GM12878 (cell line): ENCODE measurements at regions of chr9 and their contacts with region 1.

Region 1: GRCh38 chr9:19137282-19137681 is 10.0 kb upstream of the PLIN2 start:
- DNase-seq: no peak
- ATAC-seq: no peak
- H3K4me3 ChIP-seq: no peak overlapping the region
- H3K27ac ChIP-seq: no peak overlapping the region
- H3K4me1 ChIP-seq: no peaks in the 10 kb centered on the region; the same call in 1 of the 2 replicates
- H3K27me3 ChIP-seq: no peaks in the 10 kb centered on the region
- CTCF ChIP-seq: no peak
- EP300 ChIP-seq: no peak
- POLR2A ChIP-seq: no peak
- RAD21 ChIP-seq: no peak

Region 2: GRCh38 chr9:19154135-19154612 is 16.9 kb after region 1 on chr9:
- CTCF ChIA-PET with region 1: interaction called, 8 read pairs
- POLR2A ChIA-PET with region 1: interaction called, 4 read pairs
- RAD21 ChIA-PET with region 1: interaction called, 5 read pairs
- SMC1A ChIA-PET with region 1: interaction called, 15 read pairs
- in situ Hi-C with region 1: no loop called
- intact Hi-C with region 1: no loop called
- DNase-seq: no peak
- ATAC-seq: peak; percentile 21; the same call in 2 of the 3 replicates
- H3K4me3 ChIP-seq: no peak overlapping the region
- H3K27ac ChIP-seq: no peak overlapping the region
- H3K4me1 ChIP-seq: no peaks in the 10 kb centered on the region; the same call in 1 of the 2 replicates
- H3K27me3 ChIP-seq: no peaks in the 10 kb centered on the region
- CTCF ChIP-seq: no peak
- EP300 ChIP-seq: no peak
- POLR2A ChIP-seq: no peak
- RAD21 ChIP-seq: no peak

Region 3: GRCh38 chr9:19161257-19162025 is 24.2 kb after region 1 on chr9:
- CTCF ChIA-PET with region 1: interaction called, 8 read pairs
- POLR2A ChIA-PET with region 1: interaction called, 6 read pairs
- RAD21 ChIA-PET with region 1: interaction called, 5 read pairs
- SMC1A ChIA-PET with region 1: interaction called, 15 read pairs
- in situ Hi-C with region 1: no loop called
- intact Hi-C with region 1: no loop called
- DNase-seq: peak; percentile 74
- ATAC-seq: peak; percentile 96
- H3K4me3 ChIP-seq: no peak overlapping the region
- H3K27ac ChIP-seq: peak overlapping the region; percentile 35
- H3K4me1 ChIP-seq: peaks cover 5% of the 10 kb centered on the region; the same call in 1 of the 2 replicates
- H3K27me3 ChIP-seq: no peaks in the 10 kb centered on the region
- CTCF ChIP-seq: no peak
- EP300 ChIP-seq: peak in 1 of 2 experiments; percentile 75; a peak in 2 of 4 replicates
- POLR2A ChIP-seq: 0 out of 2 replicates have a peak, but pooled peaks have one; percentile 30
- RAD21 ChIP-seq: no peak

Region 4: GRCh38 chr9:19271076-19271475 is 133.8 kb after region 1 on chr9:
- CTCF ChIA-PET with region 1: no interaction called
- POLR2A ChIA-PET with region 1: no interaction called
- RAD21 ChIA-PET with region 1: no interaction called
- SMC1A ChIA-PET with region 1: no interaction called
- in situ Hi-C with region 1: no loop called
- intact Hi-C with region 1: no loop called
- DNase-seq: no peak
- ATAC-seq: no peak
- H3K4me3 ChIP-seq: no peak overlapping the region
- H3K27ac ChIP-seq: no peak overlapping the region
- H3K4me1 ChIP-seq: no peaks in the 10 kb centered on the region; the same call in 1 of the 2 replicates
- H3K27me3 ChIP-seq: no peaks in the 10 kb centered on the region
- CTCF ChIP-seq: no peak
- EP300 ChIP-seq: no peak
- POLR2A ChIP-seq: no peak
- RAD21 ChIP-seq: no peak

Region 5: DNA sequence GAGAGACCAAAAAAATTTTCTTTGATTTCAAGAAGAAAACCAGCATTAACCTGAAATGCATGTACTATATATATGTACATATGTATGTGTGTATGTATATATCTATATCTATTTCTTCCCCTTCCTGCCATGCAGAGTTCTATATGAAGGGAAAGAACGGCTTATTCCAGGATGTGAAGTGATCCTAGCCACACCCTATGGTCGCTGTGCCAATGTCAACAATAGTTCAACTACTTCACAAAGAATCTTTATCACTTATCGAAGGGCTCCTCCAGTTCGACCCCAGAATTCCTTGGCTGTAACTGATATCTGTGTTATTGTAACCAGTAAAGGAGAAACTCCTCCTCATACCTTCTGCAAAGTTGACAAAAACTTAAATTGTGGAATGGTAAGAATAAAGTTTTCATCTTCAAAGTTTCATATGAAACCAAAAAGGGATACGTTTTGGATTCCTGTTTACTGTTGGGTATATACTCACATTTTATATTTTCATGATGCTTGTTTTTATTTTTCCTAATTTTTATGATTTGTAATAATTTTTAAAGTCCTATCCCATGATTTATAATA is 149.4 kb after region 1 on chr9:
- CTCF ChIA-PET with region 1: no interaction called
- POLR2A ChIA-PET with region 1: no interaction called
- RAD21 ChIA-PET with region 1: no interaction called
- SMC1A ChIA-PET with region 1: no interaction called
- in situ Hi-C with region 1: no loop called
- intact Hi-C with region 1: no loop called
- DNase-seq: no peak
- ATAC-seq: no peak
- H3K4me3 ChIP-seq: no peak overlapping the region
- H3K27ac ChIP-seq: no peak overlapping the region
- H3K4me1 ChIP-seq: no peaks in the 10 kb centered on the region
- H3K27me3 ChIP-seq: no peaks in the 10 kb centered on the region
- CTCF ChIP-seq: no peak
- EP300 ChIP-seq: no peak
- POLR2A ChIP-seq: no peak
- RAD21 ChIP-seq: no peak